ENCODE measurements at regions of chr2 and their contacts with region 1.

Region 1: DNA sequence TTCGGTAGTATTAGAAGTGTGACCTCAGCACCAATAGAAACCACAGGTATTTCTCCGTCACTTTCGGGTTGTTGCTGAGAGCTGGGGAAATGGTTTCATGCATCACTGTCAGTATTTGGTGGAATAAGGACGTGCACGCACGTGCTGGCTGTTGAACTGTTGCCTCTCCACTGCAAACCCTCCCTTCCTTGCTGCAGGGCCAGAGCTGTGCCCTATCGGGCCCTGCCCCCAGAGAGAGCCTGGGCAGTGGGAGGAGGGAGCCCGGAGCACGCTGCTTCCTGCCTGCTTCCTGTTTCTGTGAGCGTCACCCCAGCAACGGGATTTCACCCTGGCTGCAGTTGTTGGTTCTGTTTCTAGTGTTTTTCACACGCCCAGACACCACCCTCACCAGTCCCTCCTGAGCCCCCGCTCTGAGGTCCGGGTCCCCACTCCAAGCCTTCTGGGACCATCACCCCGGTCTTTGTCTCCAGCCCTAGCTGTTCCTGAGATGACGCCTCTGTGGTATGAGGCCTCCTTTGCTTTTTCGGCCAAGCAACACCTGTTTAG is 47.4 kb downstream of the LRRFIP1 start:
- DNase-seq: peak; percentile 96
- H3K4me3 ChIP-seq: peak overlapping the region in 2 of 3 experiments; percentile 12 to 16
- H3K27ac ChIP-seq: peak overlapping the region; percentile 96
- H3K4me1 ChIP-seq: peaks cover 56% of the 10 kb centered on the region
- H3K27me3 ChIP-seq: no peaks in the 10 kb centered on the region
- CTCF ChIP-seq: no peak
- POLR2A ChIP-seq: peak; percentile 45

Region 2: GRCh38 chr2:237581751-237582746 is 92.8 kb before region 1 on chr2:
- CTCF ChIA-PET with region 1: interaction called, 24 read pairs
- POLR2A ChIA-PET with region 1: no interaction called
- dilution Hi-C with region 1: no loop called
- intact Hi-C with region 1: loop called (anchors 1 kb)
- DNase-seq: peak; percentile 79
- H3K4me3 ChIP-seq: no peak overlapping the region
- H3K27ac ChIP-seq: no peak overlapping the region
- H3K4me1 ChIP-seq: no peaks in the 10 kb centered on the region
- H3K27me3 ChIP-seq: peaks cover 2% of the 10 kb centered on the region in 2 experiments
- CTCF ChIP-seq: peak; percentile 55 to 61
- POLR2A ChIP-seq: no peak

Region 3: GRCh38 chr2:237627441-237628246 is 47.2 kb before region 1 on chr2 and contains the start of gene LRRFIP1:
- CTCF ChIA-PET with region 1: interaction called, 4 read pairs
- POLR2A ChIA-PET with region 1: no interaction called
- dilution Hi-C with region 1: no loop called
- intact Hi-C with region 1: loop called (anchors 1 kb)
- DNase-seq: peak; percentile 31
- H3K4me3 ChIP-seq: peak within 1 kb of the TSS; percentile 23 to 81 (median 42)
- H3K27ac ChIP-seq: peak within 1 kb of the TSS; percentile 27
- H3K4me1 ChIP-seq: peaks cover 13% of the 10 kb centered on the region
- H3K27me3 ChIP-seq: no peaks in the 10 kb centered on the region
- CTCF ChIP-seq: peak in 1 of 2 donors; percentile 17
- POLR2A ChIP-seq: no peak
- total RNA-seq, gene LRRFIP1: 162 and 179 TPM in 2 replicates

Region 4: GRCh38 chr2:237691908-237692600 is 17.2 kb after region 1 on chr2:
- CTCF ChIA-PET with region 1: interaction called, 42 read pairs
- POLR2A ChIA-PET with region 1: interaction called, 6 read pairs
- dilution Hi-C with region 1: no loop called
- intact Hi-C with region 1: loop called (anchors 1 kb)
- DNase-seq: peak; percentile 69
- H3K4me3 ChIP-seq: peak overlapping the region; percentile 81 to 86 (median 84)
- H3K27ac ChIP-seq: peak overlapping the region; percentile 87
- H3K4me1 ChIP-seq: peaks cover 55% of the 10 kb centered on the region
- H3K27me3 ChIP-seq: no peaks in the 10 kb centered on the region
- CTCF ChIP-seq: no peak
- POLR2A ChIP-seq: no peak

Region 5: DNA sequence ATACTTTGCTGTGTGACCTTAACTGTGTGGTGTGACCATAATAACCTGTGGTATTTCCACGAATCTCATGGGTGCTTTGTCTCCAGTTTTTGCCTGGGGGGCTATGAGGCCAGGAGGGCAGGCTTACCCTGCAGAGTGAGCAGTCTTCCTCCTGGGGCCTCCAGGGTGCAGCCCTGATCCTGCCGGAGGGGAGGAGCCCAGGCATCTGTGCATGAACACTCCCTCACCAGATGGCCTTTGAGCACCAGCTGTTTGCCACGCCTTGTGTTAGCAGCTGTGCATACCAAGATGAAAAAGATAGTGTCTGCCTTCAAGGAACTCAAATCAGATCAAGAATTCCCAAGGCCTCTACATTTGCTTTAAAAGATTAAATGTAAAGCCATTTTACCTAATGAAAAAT is 48.8 kb after region 1 on chr2:
- CTCF ChIA-PET with region 1: interaction called, 16 read pairs
- POLR2A ChIA-PET with region 1: no interaction called
- dilution Hi-C with region 1: no loop called
- intact Hi-C with region 1: no loop called
- DNase-seq: no peak
- H3K4me3 ChIP-seq: no peak overlapping the region
- H3K27ac ChIP-seq: no peak overlapping the region
- H3K4me1 ChIP-seq: peaks cover 34% of the 10 kb centered on the region
- H3K27me3 ChIP-seq: no peaks in the 10 kb centered on the region
- CTCF ChIP-seq: no peak
- POLR2A ChIP-seq: no peak

Region 6: GRCh38 chr2:237754182-237754581 is 79.4 kb after region 1 on chr2:
- CTCF ChIA-PET with region 1: interaction called, 13 read pairs
- POLR2A ChIA-PET with region 1: no interaction called
- dilution Hi-C with region 1: no loop called
- intact Hi-C with region 1: no loop called
- DNase-seq: no peak
- H3K4me3 ChIP-seq: no peak overlapping the region
- H3K27ac ChIP-seq: no peak overlapping the region
- H3K4me1 ChIP-seq: no peaks in the 10 kb centered on the region
- H3K27me3 ChIP-seq: no peaks in the 10 kb centered on the region
- CTCF ChIP-seq: no peak
- POLR2A ChIP-seq: no peak

Region 7: DNA sequence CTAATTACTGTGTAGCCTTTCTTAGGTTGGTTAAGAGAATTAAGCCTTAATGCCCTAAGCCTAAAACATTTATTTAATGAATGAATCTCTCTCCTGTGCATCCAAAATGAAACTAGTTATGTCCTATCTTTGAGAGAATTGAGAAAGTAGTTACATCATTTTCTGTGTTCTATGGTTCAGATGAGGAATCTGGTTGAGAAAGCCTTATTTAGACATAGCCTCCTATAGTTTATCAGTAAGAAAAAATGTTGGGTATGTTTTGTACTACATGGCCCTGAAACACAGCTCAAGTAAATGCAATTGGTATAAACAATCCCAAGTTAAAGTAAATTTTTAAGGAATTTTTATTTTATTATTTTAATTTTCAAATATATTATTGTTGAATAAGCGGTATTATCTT is 158.7 kb after region 1 on chr2:
- CTCF ChIA-PET with region 1: no interaction called
- POLR2A ChIA-PET with region 1: no interaction called
- dilution Hi-C with region 1: no loop called
- intact Hi-C with region 1: no loop called
- DNase-seq: no peak
- H3K4me3 ChIP-seq: no peak overlapping the region
- H3K27ac ChIP-seq: no peak overlapping the region
- H3K4me1 ChIP-seq: no peaks in the 10 kb centered on the region
- H3K27me3 ChIP-seq: peaks cover 2 to 3% of the 10 kb centered on the region in 2 experiments
- CTCF ChIP-seq: no peak
- POLR2A ChIP-seq: no peak